Activated CD4-positive, alpha-beta memory T cell treated with anti-CD3 and anti-CD28 coated beads for 36 hours (primary cell): ENCODE measurements at regions of chr22 and their contacts with region 1.

Region 1: DNA sequence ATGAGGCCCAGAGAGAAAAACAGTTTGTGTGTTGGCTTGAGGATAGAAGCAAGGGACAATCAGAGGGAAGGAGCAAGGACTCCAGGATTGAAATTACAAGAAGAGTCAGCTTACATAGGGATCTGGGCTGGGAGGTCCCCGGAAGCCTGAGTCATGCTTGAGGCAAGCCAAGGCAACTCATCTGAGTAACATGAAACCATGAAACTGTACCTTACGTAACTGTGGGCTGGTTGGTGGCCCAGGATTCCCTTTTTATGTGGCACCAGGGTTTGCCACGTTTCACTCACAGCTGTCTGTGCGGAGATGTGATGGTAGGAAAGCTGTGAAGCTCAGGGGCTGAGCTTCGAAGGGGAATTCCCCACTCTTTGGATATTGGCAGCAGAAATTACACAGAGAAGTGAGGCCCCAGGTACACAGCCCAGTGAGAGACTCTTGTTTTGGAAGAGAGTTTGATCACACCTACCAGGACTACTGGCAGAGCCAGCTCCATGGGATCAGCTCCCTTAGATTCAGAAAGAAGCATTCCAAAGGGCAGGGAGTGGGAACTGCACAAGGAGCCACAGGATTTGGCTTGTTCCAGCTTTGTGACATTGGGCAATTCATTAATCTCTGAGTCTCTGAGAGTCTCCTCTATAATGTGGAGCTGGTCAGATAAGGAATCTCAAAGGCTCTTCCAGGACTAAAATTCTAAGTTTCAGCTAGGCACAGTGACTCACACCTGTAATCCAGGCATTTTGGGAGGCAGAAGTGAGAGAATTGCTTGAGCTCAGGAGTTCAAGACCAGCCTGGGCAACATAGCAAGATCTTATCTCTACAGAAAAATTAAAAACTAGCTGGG is 7.8 kb downstream of the SLC5A1 start:
- DNase-seq: peak; percentile 94
- H3K4me3 Mint-ChIP-seq: no peak overlapping the region
- H3K27ac Mint-ChIP-seq: peak overlapping the region; percentile 26
- H3K4me1 Mint-ChIP-seq: peaks cover 20% of the 10 kb centered on the region
- H3K27me3 Mint-ChIP-seq: peaks cover 52% of the 10 kb centered on the region

Region 2: GRCh38 chr22:32020117-32020516 is 30.8 kb before region 1 on chr22:
- CTCF ChIA-PET with region 1: interaction called, 3 read pairs
- POLR2A ChIA-PET with region 1: interaction called, 4 read pairs
- intact Hi-C with region 1: loop called (anchors 1 kb)
- DNase-seq: no peak
- H3K4me3 Mint-ChIP-seq: no peak overlapping the region
- H3K27ac Mint-ChIP-seq: no peak overlapping the region
- H3K4me1 Mint-ChIP-seq: peaks cover 8% of the 10 kb centered on the region
- H3K27me3 Mint-ChIP-seq: peaks cover 23% of the 10 kb centered on the region

Region 3: DNA sequence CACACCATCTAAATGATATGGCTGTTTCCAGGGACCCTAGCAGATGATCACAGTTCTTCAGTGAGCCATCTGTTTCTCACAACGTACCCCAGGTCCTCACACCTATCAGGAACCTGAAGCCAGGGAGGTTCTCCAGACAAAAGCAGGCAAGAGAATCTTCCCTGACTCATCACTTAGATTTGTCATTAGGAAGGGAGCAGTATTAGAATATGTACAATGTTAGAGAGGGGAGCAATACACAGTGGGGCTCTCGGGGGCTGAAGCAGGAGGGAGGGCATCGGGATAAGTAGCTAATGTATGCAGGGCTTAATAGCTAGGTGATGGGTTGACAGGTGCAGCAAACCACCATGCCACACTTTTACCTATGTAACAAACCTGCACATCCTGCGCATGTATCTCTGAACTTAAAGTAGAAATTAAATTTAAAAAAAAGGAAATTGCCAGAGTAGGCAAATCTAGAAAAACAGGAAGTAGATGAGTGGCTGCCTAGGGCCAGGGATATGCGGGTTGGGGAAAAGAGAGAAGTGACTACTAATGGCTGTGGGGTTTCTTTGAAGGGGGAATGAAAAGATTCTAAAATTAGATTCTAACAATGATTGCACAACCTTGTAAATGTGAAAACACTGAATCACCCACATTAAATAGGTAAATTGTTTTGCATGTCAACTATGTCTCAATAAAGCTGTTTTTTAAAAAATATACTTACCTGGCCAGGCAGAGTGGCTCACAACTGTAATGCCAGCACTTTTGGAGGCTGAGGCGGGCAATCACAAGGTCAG is 93.8 kb after region 1 on chr22:
- CTCF ChIA-PET with region 1: no interaction called
- POLR2A ChIA-PET with region 1: no interaction called
- intact Hi-C with region 1: loop called (anchors 1 kb)
- DNase-seq: peak; percentile 26
- H3K4me3 Mint-ChIP-seq: no peak overlapping the region
- H3K27ac Mint-ChIP-seq: peak overlapping the region; percentile 92
- H3K4me1 Mint-ChIP-seq: peaks cover 46% of the 10 kb centered on the region
- H3K27me3 Mint-ChIP-seq: no peaks in the 10 kb centered on the region

Region 4: GRCh38 chr22:32482708-32483107 is 431.8 kb after region 1 on chr22:
- CTCF ChIA-PET with region 1: no interaction called
- POLR2A ChIA-PET with region 1: no interaction called
- intact Hi-C with region 1: loop called (anchors 2 kb)
- DNase-seq: peak; percentile 56
- H3K4me3 Mint-ChIP-seq: no peak overlapping the region
- H3K27ac Mint-ChIP-seq: no peak overlapping the region
- H3K4me1 Mint-ChIP-seq: peaks cover 34% of the 10 kb centered on the region
- H3K27me3 Mint-ChIP-seq: no peaks in the 10 kb centered on the region